ENCODE measurements at regions of chr5 and their contacts with region 1.

Region 1: GRCh38 chr5:149990518-149991376 is 9.7 kb downstream of the TIGD6 start:
- DNase-seq: peak; percentile 32 to 75
- ATAC-seq: peak; percentile 84 to 94
- H3K4me3 ChIP-seq: no peak overlapping the region
- H3K27ac ChIP-seq: no peak overlapping the region
- H3K4me1 ChIP-seq: peaks cover 19 to 27% of the 10 kb centered on the region in 2 donors
- H3K27me3 ChIP-seq: no peaks in the 10 kb centered on the region
- CTCF ChIP-seq: peak; percentile 87 to 96 (median 91)
- POLR2A ChIP-seq: no peak

Region 2: GRCh38 chr5:149471406-149472183 is 519.2 kb before region 1 on chr5:
- in situ Hi-C with region 1: no loop called
- intact Hi-C with region 1: no loop called
- DNase-seq: peak in 1 of 2 donors; percentile 14
- ATAC-seq: peak in 1 of 2 donors; percentile 16
- H3K4me3 ChIP-seq: no peak overlapping the region
- H3K27ac ChIP-seq: peak overlapping the region in 2 of 4 donors; percentile 0 to 11
- H3K4me1 ChIP-seq: peaks cover 5 to 14% of the 10 kb centered on the region in 2 donors
- H3K27me3 ChIP-seq: no peaks in the 10 kb centered on the region
- CTCF ChIP-seq: no peak
- POLR2A ChIP-seq: no peak

Region 3: DNA sequence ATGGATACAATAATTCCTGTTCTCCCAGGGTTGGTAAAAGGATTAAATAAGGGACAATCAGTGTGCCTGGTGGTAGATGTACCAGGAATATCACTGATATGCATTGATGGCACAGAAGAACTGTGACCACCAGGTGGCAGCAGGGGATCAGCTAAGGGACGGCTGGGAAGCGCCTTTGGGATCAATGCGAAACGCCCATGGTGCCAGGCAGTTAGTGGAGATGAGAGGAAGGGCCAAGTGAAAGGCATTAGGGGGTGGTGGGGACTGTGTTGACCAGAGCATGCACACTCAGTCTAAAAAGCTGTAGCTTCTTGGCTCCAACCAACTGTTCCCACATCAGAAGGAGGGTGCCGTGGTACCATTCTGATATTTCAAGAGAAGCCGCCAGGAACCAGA is 353.9 kb before region 1 on chr5:
- in situ Hi-C with region 1: loop called (anchors 5 to 10 kb)
- intact Hi-C with region 1: loop called (anchors 1 kb)
- DNase-seq: peak in 1 of 2 donors; percentile 49
- ATAC-seq: peak; percentile 32 to 40
- H3K4me3 ChIP-seq: no peak overlapping the region
- H3K27ac ChIP-seq: no peak overlapping the region
- H3K4me1 ChIP-seq: peaks cover 21 to 26% of the 10 kb centered on the region in 2 donors
- H3K27me3 ChIP-seq: no peaks in the 10 kb centered on the region
- CTCF ChIP-seq: peak; percentile 70 to 93 (median 89)
- POLR2A ChIP-seq: no peak

Region 4: GRCh38 chr5:149834246-149834855 is 156.4 kb before region 1 on chr5:
- in situ Hi-C with region 1: loop called in 2 of 4 experiments (anchors 5 kb)
- intact Hi-C with region 1: loop called (anchors 1 kb)
- DNase-seq: peak in 1 of 2 donors; percentile 63
- ATAC-seq: peak; percentile 40 to 73
- H3K4me3 ChIP-seq: no peak overlapping the region
- H3K27ac ChIP-seq: no peak overlapping the region
- H3K4me1 ChIP-seq: peaks cover 0 to 12% of the 10 kb centered on the region in 2 donors
- H3K27me3 ChIP-seq: no peaks in the 10 kb centered on the region
- CTCF ChIP-seq: peak; percentile 40 to 77 (median 61)
- POLR2A ChIP-seq: no peak

Region 5: DNA sequence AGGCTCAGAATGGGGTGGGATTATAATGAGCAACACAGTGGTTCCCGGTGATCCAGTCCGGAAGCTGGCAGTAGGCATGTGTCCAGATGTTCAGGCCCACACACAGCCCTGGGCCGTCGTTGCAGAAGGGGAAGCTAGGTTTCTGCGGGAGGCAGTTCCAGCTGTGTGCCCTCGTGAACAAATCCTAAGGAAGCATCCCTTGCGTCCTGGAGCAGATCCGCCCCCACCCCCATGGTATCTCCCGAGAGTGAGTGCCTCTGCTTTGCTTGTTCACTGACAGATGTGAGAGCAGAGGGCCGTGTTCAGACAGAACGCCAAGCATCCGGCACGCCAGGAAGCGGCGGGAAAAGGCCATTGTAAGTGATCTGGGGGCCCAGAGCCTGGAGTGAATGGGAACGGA is 151.0 kb before region 1 on chr5:
- in situ Hi-C with region 1: loop called in 3 of 4 experiments (anchors 5 kb)
- intact Hi-C with region 1: loop called (anchors 1 kb)
- DNase-seq: no peak
- ATAC-seq: no peak
- H3K4me3 ChIP-seq: no peak overlapping the region
- H3K27ac ChIP-seq: peak overlapping the region; percentile 7 to 50 (median 40)
- H3K4me1 ChIP-seq: peaks cover 0 to 21% of the 10 kb centered on the region in 2 donors
- H3K27me3 ChIP-seq: no peaks in the 10 kb centered on the region
- CTCF ChIP-seq: no peak
- POLR2A ChIP-seq: no peak

Region 6: GRCh38 chr5:149938791-149939358 is 51.9 kb before region 1 on chr5:
- in situ Hi-C with region 1: no loop called
- intact Hi-C with region 1: loop called (anchors 2 kb)
- DNase-seq: peak in 1 of 2 donors; percentile 27
- ATAC-seq: peak; percentile 59 to 73
- H3K4me3 ChIP-seq: no peak overlapping the region
- H3K27ac ChIP-seq: peak overlapping the region in 2 of 4 donors; percentile 31 to 41
- H3K4me1 ChIP-seq: peaks cover 0 to 11% of the 10 kb centered on the region in 2 donors
- H3K27me3 ChIP-seq: no peaks in the 10 kb centered on the region
- CTCF ChIP-seq: no peak
- POLR2A ChIP-seq: no peak